Head of caudate nucleus (tissue), 42 donors: ENCODE measurements at regions of chr15 and their contacts with region 1.

Region 1: GRCh38 chr15:28994831-28995596 is 109.2 kb downstream of the APBA2 start:
- DNase-seq: peak in 35 of 42 donors; percentile 52 to 87 (median 70)

Region 2: GRCh38 chr15:29045717-29046116 is 50.7 kb after region 1 on chr15:
- intact Hi-C with region 1: loop called (anchors 10 kb)
- DNase-seq: peak in 5 of 42 donors; percentile 13 to 43 (median 32)